Heart right ventricle (tissue), 16 donors: ENCODE measurements at regions of chr11 and their contacts with region 1.

Region 1: DNA sequence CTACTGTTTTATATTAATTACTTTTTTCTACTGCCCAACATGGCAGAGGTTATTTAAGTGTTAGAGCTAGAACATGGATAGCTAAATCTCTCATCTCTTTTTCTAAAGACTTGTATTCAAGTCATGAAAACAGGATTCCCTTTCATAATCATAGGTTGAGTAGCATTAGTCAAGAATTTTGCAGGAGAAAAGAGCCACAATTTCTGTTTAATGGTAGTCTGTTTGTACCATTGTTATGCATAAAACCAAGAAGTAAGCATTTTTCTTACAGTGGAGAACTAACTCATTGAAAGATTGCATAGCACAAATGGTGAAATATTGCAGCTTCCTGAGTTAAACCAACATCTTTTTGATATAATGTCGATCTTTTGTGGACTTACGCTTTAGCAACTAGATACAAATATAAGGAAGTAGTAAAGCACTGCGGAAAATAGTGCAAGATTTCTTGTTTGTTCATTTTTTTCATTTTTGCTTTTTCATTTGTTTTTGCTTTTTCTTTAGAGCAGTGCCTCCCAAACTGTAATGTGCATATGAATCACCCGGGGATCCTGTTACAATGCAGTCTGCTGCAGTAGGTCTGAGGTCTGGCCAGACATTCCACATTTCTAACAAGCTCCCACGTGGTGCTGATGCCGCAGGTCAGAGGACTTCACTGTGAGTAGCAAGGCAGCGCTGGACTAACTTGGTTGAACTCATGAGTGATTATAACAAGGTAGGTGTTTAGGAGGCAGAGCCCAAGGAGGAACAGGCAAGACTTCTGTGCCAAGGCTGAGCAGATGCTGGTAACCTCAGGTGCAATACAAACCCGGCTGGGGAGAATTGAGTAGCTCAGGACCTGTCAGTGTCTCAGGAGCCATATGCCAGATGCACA is 4.6 kb downstream of the ETS1 start:
- DNase-seq: peak in 1 of 2 donors; percentile 34
- ATAC-seq: peak; percentile 42 to 90 (median 67)
- H3K4me3 ChIP-seq: no peak overlapping the region
- H3K27ac ChIP-seq: peak overlapping the region in 5 of 10 donors; percentile 1 to 50 (median 29)
- H3K4me1 ChIP-seq: peaks cover 0 to 85% (median 45%) of the 10 kb centered on the region in 9 donors
- H3K27me3 ChIP-seq: no peaks in the 10 kb centered on the region
- CTCF ChIP-seq: no peak

Region 2: GRCh38 chr11:128616161-128616560 is 33.4 kb after region 1 on chr11:
- intact Hi-C with region 1: loop called in 1 of 10 experiments (anchors 5 kb)
- DNase-seq: peak in 1 of 2 donors; percentile 45
- ATAC-seq: peak in 1 of 8 donors; percentile 64
- H3K4me3 ChIP-seq: no peak overlapping the region
- H3K27ac ChIP-seq: no peak overlapping the region
- H3K4me1 ChIP-seq: peaks cover 0 to 39% (median 24%) of the 10 kb centered on the region in 9 donors
- H3K27me3 ChIP-seq: no peaks in the 10 kb centered on the region
- CTCF ChIP-seq: no peak

Region 3: GRCh38 chr11:128776424-128777284 is 193.9 kb after region 1 on chr11:
- intact Hi-C with region 1: no loop called
- DNase-seq: peak; percentile 67 to 76
- ATAC-seq: peak; percentile 46 to 80 (median 65)
- H3K4me3 ChIP-seq: peak overlapping the region in 2 of 10 donors; percentile 8 to 11
- H3K27ac ChIP-seq: peak overlapping the region in 7 of 10 donors; percentile 18 to 67 (median 40)
- H3K4me1 ChIP-seq: peaks cover 5 to 72% (median 41%) of the 10 kb centered on the region in 9 donors
- H3K27me3 ChIP-seq: no peaks in the 10 kb centered on the region
- CTCF ChIP-seq: peak; percentile 27 to 67 (median 50)